Activated naive CD4-positive, alpha-beta T cell treated with anti-CD3 and anti-CD28 coated beads for 36 hours (primary cell): ENCODE measurements at regions of chr18 and their contacts with region 1.

Region 1: DNA sequence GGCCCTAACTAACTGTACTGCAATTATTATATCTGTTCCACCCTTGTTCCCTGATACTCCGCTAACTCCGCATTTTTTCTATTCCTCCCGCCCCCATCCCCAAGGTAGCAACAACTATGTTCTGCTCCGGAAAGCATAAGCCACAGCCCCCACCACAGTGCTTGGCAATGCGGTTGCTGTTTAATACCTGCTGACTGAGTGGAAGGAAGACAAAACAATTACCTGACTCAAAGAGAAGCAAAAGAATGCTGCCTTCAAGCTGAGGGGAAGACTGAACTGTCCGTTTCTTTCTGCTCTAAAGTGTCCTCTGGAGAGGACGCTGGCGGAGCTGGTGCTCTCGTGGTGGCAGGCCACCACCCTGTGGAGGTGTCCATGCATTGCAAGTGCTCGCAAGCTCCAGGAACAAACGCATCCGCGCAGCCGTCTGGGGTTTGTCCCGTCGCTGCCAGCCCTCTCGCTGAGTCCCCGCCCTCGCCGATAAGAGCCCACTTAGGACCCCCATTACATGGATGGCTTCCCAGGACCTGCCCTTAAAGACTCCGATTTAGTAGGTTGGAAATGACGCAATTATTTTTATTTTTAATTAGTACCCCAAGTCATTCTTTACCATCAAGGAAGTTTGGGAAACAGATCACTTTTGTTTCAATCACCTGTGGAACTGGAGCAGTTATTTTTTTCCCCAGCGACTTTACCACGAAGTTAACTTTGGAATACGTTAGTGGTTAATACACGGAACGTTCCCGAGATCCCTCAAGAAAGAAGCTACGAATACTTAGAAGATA is 1.6 kb upstream of the MYL12A start:
- DNase-seq: peak; percentile 91
- H3K4me3 Mint-ChIP-seq: peak overlapping the region; percentile 90
- H3K27ac Mint-ChIP-seq: peak overlapping the region; percentile 92
- H3K4me1 Mint-ChIP-seq: peaks cover 23% of the 10 kb centered on the region
- H3K27me3 Mint-ChIP-seq: no peaks in the 10 kb centered on the region

Region 2: DNA sequence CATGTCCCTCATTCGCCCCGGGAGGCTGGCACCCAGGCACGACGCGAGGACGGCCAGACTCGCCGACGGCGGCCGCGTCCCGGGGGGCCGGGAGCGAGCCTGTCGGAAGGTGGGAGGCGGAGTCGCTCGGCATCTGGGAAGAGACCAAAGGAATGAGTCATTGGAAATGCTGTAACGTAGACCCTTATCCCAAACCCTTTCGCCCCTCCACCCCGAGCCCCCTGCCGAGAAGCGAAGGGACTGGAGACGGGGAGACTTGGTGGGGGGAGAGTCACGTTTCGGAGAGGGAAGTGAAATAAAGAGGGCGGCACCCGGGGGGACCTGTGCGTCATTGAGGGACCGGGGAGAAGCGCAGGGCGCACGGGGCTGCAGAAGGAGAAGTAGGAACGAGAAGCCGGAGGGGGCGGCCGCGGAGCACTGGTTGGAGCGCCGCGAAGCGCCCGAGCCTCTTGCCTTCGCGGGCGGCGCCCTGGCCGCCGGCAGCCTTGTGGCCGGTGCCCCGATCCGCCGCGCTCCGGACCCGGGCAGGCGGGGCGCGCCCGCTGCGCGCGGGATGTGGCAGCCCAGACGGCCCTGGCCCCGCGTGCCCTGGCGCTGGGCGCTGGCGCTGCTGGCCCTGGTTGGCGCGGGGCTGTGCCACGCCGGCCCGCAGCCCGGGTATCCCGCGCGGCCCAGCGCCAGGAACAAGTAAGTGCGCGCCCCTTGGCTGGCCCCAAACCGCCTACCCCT is 399.2 kb before region 1 on chr18 and contains the start of gene EMILIN2:
- CTCF ChIA-PET with region 1: interaction called, 3 read pairs
- intact Hi-C with region 1: loop called (anchors 1 kb)
- DNase-seq: peak; percentile 64
- H3K4me3 Mint-ChIP-seq: peak within 1 kb of the TSS; percentile 83
- H3K27ac Mint-ChIP-seq: peak within 1 kb of the TSS; percentile 61
- H3K4me1 Mint-ChIP-seq: peaks cover 18% of the 10 kb centered on the region
- H3K27me3 Mint-ChIP-seq: peaks cover 31% of the 10 kb centered on the region
- total RNA-seq, gene EMILIN2: 12.2 to 13.2 TPM

Region 3: GRCh38 chr18:2971741-2972552 is 274.1 kb before region 1 on chr18:
- CTCF ChIA-PET with region 1: interaction called, 4 read pairs
- intact Hi-C with region 1: loop called (anchors 1 kb)
- DNase-seq: peak; percentile 83
- H3K4me3 Mint-ChIP-seq: peak overlapping the region; percentile 77
- H3K27ac Mint-ChIP-seq: peak overlapping the region; percentile 100
- H3K4me1 Mint-ChIP-seq: peaks cover 86% of the 10 kb centered on the region
- H3K27me3 Mint-ChIP-seq: no peaks in the 10 kb centered on the region

Region 4: DNA sequence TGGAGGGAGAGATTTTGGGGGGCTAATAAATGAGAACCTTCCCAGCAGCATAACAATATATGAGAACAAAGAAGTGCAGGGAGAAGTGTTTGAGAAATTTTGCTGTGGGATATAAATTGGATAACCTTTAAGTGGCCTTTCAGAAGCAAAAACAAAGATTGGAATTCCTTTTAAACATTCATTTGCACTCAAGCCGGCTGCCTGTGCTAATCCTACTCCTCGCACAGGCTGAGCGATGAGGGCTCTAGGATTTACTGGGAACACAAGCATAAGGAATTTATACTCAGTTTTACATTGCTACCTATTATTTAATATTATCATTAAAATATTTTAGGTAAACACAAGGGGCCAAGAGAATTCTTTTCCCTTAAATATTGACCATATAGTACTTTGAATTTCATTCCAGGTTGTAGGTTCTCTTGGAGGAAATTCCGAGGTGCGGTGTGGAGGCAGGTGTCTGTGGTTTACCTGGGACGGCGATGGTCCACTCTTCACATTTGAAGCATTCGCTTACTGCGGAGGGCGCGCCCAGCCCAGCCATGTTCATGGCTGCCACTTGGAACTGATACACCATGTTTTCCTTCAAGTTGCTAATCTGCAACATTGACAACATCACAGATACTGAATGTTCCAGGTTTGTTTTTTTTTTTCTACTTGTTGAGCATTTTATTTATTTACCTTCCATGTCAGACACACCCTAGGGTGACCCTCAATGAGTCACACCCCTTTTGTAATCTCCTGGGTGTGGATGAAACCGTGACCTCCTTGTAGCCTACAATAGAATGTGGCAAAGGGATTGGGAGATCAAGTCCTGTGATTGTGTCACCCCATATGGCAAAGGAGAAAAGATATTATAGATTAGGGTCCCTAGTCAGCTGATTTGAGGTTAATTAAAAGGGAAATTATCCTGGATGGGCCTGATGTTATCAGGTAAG is 126.4 kb before region 1 on chr18:
- CTCF ChIA-PET with region 1: no interaction called
- intact Hi-C with region 1: loop called (anchors 2 kb)
- DNase-seq: no peak
- H3K4me3 Mint-ChIP-seq: no peak overlapping the region
- H3K27ac Mint-ChIP-seq: no peak overlapping the region
- H3K4me1 Mint-ChIP-seq: no peaks in the 10 kb centered on the region
- H3K27me3 Mint-ChIP-seq: no peaks in the 10 kb centered on the region

Region 5: DNA sequence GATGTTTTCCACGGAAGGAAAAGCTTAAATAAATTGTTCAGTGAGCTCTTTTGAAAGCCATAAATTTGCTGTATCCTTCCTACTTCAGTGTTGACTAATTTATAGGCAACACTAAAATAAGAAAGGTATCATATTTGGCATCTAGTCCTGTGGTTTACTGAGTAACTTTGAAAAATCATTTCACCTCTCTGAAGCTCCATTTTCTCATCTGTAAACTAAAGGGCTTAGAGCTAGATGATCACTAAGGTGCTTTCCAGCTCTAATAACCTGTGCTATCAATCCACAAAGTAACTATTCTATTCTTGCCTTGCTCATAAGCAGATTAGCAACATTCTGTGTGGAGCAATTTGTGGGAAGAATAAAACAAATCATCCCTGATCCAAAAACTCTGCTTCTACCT is 22.7 kb before region 1 on chr18:
- CTCF ChIA-PET with region 1: interaction called, 15 read pairs
- intact Hi-C with region 1: no loop called
- DNase-seq: no peak
- H3K4me3 Mint-ChIP-seq: no peak overlapping the region
- H3K27ac Mint-ChIP-seq: no peak overlapping the region
- H3K4me1 Mint-ChIP-seq: peaks cover 9% of the 10 kb centered on the region
- H3K27me3 Mint-ChIP-seq: no peaks in the 10 kb centered on the region

Region 6: GRCh38 chr18:3593904-3594661 is 348.0 kb after region 1 on chr18:
- CTCF ChIA-PET with region 1: interaction called, 3 read pairs
- intact Hi-C with region 1: loop called (anchors 1 kb)
- DNase-seq: peak; percentile 95
- H3K4me3 Mint-ChIP-seq: peak overlapping the region; percentile 92
- H3K27ac Mint-ChIP-seq: peak overlapping the region; percentile 100
- H3K4me1 Mint-ChIP-seq: peaks cover 48% of the 10 kb centered on the region
- H3K27me3 Mint-ChIP-seq: no peaks in the 10 kb centered on the region